Psoas muscle (tissue), 8 donors: ENCODE measurements at regions of chr20 and their contacts with region 1.

Region 1: DNA sequence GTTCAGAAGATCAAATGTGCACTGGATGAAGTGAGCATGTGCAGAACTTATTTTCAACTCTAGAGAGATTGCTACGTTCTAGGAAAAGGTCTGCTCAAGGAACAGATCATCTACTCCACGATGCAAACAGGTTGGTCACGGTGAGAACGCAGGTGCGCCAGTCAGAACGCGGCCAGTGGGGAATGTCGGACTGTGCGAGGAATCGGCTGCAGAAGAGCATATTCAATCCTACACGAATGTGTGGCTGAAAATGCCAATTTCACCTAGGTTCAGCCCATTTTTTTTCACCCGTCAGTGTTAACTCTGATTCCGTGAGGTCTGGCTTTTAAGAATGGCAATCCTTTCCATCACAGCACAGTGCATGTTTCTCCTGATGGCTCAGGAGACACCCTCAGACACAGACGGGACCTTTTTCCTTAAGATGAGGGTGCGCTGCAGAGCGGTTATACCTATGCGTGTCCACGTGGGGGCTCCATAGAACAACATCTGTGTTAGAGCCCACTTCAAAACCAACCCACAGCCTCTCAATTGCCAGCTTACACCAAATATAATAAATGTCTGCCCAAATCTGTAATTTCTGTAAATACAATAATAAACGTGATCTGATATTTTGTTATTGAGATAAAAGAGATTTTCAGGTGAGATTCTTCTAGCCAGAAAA is 250.4 kb downstream of the FOXA2 start:
- DNase-seq: peak; percentile 35 to 56
- ATAC-seq: peak; percentile 56 to 85 (median 79)
- H3K4me3 ChIP-seq: no peak overlapping the region
- H3K27ac ChIP-seq: no peak overlapping the region
- H3K4me1 ChIP-seq: no peaks in the 10 kb centered on the region
- H3K27me3 ChIP-seq: no peaks in the 10 kb centered on the region
- CTCF ChIP-seq: peak; percentile 73

Region 2: DNA sequence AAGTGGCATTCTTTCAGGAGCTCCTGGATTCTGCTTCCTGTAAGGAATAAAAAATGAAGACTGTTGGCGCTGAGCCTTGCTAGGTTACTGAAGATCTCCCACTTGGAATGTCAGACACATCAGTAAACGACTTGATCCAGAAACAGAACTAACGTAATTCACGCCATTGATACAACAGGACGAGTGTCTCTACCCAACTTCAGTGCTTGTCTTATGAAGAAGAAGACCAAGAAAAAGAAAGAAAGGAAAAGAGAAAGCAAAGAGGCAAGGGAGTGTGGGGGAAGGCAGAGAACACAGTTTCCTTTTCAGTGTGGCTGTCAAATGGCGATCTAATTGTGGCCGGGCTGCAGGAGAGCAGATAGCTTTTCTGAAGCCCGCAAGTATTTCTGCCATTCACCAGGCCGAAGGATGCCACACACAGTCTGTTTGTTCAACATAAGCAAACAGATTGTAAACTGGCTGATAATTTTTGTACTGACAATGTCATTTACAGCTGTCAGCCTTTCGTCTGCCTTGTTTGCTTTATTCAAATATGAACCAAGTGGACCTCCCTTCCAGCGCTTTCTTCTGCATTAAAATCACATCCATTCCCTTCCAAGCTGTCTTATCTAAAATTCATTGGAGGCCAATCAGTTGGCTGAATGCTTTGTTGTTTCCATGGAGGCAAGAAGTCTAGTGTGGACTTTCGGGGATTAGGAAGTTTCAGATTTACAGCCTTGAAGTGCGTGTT is 69.8 kb after region 1 on chr20:
- intact Hi-C with region 1: loop called in 1 of 2 experiments (anchors 10 kb)
- DNase-seq: no peak
- ATAC-seq: peak in 1 of 4 donors; percentile 42
- H3K4me3 ChIP-seq: peak overlapping the region; percentile 52
- H3K27ac ChIP-seq: no peak overlapping the region
- H3K4me1 ChIP-seq: peaks cover 3% of the 10 kb centered on the region
- H3K27me3 ChIP-seq: peaks cover 0 to 5% (median 5%) of the 10 kb centered on the region in 3 donors
- CTCF ChIP-seq: no peak

Region 3: DNA sequence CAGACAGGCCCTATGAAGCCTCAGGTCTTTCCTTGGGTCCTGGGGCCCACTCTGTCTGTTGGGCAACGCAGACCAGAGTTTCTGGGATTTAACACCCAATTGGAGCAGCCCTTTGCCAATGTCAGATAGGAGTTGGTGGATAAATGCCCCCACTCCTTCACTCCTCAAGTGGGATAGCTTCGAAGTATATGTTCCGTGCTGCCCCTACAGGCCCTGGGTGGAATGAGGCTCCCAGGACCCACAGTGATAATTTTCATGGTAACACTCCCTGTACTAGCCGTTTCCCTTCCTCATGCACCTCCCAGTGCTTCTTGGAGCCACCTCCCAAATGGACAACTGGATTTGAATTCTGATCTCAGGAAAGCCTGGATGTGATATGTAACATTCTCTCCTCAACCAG is 104.9 kb after region 1 on chr20:
- intact Hi-C with region 1: loop called in 1 of 2 experiments (anchors 10 kb)
- DNase-seq: no peak
- ATAC-seq: no peak
- H3K4me3 ChIP-seq: no peak overlapping the region
- H3K27ac ChIP-seq: no peak overlapping the region
- H3K4me1 ChIP-seq: no peaks in the 10 kb centered on the region
- H3K27me3 ChIP-seq: peaks cover 0 to 4% (median 1%) of the 10 kb centered on the region in 3 donors
- CTCF ChIP-seq: no peak

Region 4: GRCh38 chr20:22586645-22587310 is 252.8 kb after region 1 on chr20:
- intact Hi-C with region 1: loop called (anchors 2 to 10 kb)
- DNase-seq: peak in 1 of 2 donors; percentile 65
- ATAC-seq: peak in 2 of 4 donors; percentile 59 to 76
- H3K4me3 ChIP-seq: no peak overlapping the region
- H3K27ac ChIP-seq: no peak overlapping the region
- H3K4me1 ChIP-seq: peaks cover 8% of the 10 kb centered on the region
- H3K27me3 ChIP-seq: peaks cover 22 to 84% (median 43%) of the 10 kb centered on the region in 3 donors
- CTCF ChIP-seq: peak; percentile 47

Region 5: DNA sequence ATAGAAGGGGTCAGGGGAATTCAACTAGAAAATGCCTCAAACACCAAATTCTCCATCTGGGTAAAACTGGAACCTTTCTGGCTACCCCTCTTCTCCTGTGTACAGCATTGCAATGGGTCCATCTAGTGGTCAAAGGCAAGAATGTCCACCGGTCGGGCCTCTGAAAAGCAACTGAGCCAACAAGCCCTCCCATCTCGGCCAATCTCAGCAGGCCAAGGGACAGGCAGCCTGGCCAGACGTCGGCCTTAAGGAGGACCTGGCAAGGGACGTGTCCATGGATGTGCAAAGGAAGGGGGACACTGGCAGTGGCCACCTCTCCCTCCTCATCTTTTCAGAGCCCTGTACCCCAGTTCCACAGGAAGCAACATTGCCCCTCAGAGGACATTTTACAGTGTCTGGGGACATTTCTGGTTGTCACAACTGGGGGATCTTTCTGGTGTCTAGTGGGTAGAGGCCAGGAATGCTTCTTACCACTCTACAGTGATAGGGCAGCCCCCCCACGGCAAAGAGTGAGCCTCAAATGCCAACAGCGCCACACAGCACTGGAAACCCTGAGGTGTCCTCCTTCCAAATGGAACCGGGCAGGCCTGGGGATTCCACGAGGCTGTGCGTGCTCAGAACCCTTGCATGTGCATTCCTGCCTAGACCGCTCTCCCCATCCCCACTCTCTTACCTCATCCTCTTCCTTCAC is 350.2 kb after region 1 on chr20:
- intact Hi-C with region 1: loop called in 1 of 2 experiments (anchors 2 kb)
- DNase-seq: peak; percentile 37 to 69
- ATAC-seq: peak; percentile 77 to 92 (median 84)
- H3K4me3 ChIP-seq: no peak overlapping the region
- H3K27ac ChIP-seq: no peak overlapping the region
- H3K4me1 ChIP-seq: no peaks in the 10 kb centered on the region
- H3K27me3 ChIP-seq: no peaks in the 10 kb centered on the region
- CTCF ChIP-seq: peak; percentile 79

Region 6: GRCh38 chr20:23350196-23350903 is 1016.3 kb after region 1 on chr20 and contains the start of gene NXT1:
- intact Hi-C with region 1: loop called (anchors 10 kb)
- DNase-seq: peak; percentile 97
- ATAC-seq: peak; percentile 93 to 94 (median 93)
- H3K4me3 ChIP-seq: peak within 1 kb of the TSS; percentile 91
- H3K27ac ChIP-seq: peak within 1 kb of the TSS; percentile 99
- H3K4me1 ChIP-seq: peaks cover 13% of the 10 kb centered on the region
- H3K27me3 ChIP-seq: no peaks in the 10 kb centered on the region
- CTCF ChIP-seq: no peak
- total RNA-seq, gene NXT1: 6.7 to 18.9 (median 11.1) TPM